Panc1 (cell line): ENCODE measurements at regions of chr14 and their contacts with region 1.

Region 1: GRCh38 chr14:83300476-83301064 is 1766.9 kb upstream of the SEL1L start:
- DNase-seq: peak; percentile 20
- ATAC-seq: no peak
- H3K4me3 ChIP-seq: no peak overlapping the region
- H3K27ac ChIP-seq: no peak overlapping the region
- H3K4me1 ChIP-seq: no peaks in the 10 kb centered on the region
- H3K27me3 ChIP-seq: no peaks in the 10 kb centered on the region
- CTCF ChIP-seq: peak; percentile 76; the same call in 1 of the 2 replicates

Region 2: DNA sequence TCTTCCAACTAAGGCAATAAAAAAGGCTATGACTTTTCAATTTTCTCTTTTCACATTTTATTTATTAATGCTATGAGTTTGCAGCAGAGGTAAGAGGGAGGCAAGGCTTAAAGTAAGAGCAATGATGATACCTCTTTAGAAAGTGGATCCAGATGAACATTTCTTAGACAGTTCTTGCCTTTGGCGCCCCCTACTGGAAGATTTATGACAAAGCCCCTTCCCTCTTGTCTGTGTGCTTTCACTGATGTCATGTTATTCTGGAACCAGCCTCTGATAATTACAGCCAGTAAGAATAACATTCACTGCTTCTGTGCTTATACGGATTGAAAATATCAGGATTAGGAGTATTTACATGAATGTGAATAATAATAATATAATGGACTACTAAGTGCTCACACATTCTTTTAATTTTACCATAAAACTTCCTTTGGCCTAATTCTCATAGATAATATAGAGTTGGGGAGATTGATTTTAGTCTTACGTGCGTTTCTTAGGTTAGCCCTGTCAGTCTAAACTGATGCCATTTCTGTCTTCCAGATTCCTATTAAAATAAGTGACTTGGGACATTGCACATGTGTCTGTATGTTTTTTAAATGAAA is 163.0 kb after region 1 on chr14:
- CTCF ChIA-PET with region 1: no interaction called
- POLR2A ChIA-PET with region 1: no interaction called
- in situ Hi-C with region 1: no loop called
- intact Hi-C with region 1: loop called (anchors 10 kb)
- DNase-seq: no peak
- ATAC-seq: no peak
- H3K4me3 ChIP-seq: no peak overlapping the region
- H3K27ac ChIP-seq: no peak overlapping the region
- H3K4me1 ChIP-seq: no peaks in the 10 kb centered on the region
- H3K27me3 ChIP-seq: no peaks in the 10 kb centered on the region
- CTCF ChIP-seq: peak; percentile 45; the same call in 1 of the 2 replicates